Activated CD4-positive, alpha-beta T cell treated with anti-CD3 and anti-CD28 coated beads, Interleukin-2, amount 10 ng/mL, durations not matched to agents 24 days and 14 days (primary cell): ENCODE measurements at regions of chr3 and their contacts with region 1.

Region 1: DNA sequence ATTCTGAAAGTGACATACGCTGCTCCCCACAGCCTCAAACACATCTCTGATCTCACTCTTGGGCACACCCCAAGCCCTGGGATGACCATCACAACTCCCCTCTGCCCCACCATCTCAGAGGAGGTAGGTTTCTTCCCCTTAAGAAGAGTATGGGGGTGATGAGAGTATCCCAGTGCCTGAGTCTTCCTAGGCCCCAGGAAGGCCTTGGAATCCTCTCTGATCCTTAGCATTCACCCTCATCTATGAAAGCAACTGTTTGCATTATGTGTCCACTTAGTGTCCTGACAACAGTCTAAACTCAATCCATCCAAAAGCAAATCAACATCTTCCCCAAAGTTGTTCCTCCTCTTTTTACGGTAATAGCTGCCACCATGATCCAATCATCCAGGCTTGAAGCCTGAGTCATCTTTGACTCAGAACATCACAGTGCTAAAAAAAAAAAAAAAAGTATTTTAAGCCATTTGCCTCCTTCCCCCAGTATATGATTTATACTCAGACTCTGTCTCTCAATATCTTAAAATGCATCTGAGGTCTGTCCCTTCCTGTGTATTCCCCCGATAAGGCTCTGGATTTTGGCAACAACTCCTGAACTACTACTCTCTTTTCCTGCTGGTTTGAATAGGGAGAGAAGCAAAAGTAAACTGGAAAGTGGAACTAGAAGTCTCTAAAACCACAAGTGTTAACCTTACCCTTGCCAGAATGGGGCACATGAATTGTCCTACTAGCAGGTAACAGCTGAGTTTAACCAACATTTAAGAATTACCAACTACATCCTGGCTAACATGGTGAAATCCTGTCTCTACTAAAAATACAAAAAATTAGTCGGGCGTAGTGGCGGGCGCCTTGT is 22.5 kb downstream of the POPDC2 start:
- DNase-seq: peak; percentile 68
- H3K4me3 Mint-ChIP-seq: peak overlapping the region; percentile 75
- H3K27ac Mint-ChIP-seq: peak overlapping the region; percentile 95
- H3K4me1 Mint-ChIP-seq: peaks cover 36% of the 10 kb centered on the region
- H3K27me3 Mint-ChIP-seq: no peaks in the 10 kb centered on the region

Region 2: GRCh38 chr3:119293871-119294695 is 343.8 kb before region 1 on chr3 and contains the start of gene ARHGAP31:
- intact Hi-C with region 1: loop called (anchors 1 kb)
- DNase-seq: peak; percentile 95
- H3K4me3 Mint-ChIP-seq: peak within 1 kb of the TSS; percentile 86
- H3K27ac Mint-ChIP-seq: peak within 1 kb of the TSS; percentile 89
- H3K4me1 Mint-ChIP-seq: peaks cover 37% of the 10 kb centered on the region
- H3K27me3 Mint-ChIP-seq: peaks cover 14% of the 10 kb centered on the region
- total RNA-seq, gene ARHGAP31: 9.5 and 11.0 TPM in 2 replicates

Region 3: DNA sequence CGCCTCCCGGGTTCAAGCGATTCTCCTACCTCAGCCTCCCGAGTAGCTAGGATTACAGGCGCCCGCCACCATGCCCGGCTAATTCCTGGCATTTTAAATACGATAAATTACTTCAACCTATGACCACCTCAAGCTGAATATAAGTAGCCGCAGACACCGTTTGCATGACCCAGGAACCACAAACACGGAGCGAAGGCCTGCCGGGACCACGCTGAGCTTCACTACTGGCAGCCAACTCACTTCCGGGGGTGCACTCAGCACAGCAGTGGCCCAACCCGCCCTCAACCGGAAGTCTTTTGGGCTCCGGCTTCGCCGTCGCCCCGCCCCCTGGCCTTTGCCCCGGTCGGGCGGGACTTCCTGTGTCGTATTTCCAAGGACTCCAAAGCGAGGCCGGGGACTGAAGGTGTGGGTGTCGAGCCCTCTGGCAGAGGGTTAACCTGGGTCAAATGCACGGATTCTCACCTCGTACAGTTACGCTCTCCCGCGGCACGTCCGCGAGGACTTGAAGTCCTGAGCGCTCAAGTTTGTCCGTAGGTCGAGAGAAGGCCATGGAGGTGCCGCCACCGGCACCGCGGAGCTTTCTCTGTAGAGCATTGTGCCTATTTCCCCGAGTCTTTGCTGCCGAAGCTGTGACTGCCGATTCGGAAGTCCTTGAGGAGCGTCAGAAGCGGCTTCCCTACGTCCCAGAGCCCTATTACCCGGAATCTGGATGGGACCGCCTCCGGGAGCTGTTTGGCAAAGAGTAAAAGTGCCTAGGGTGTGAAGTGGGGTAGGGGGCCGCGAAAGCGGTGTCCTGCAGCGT is 139.5 kb before region 1 on chr3 and contains the start of gene TIMMDC1:
- intact Hi-C with region 1: loop called (anchors 2 kb)
- DNase-seq: peak; percentile 99
- H3K4me3 Mint-ChIP-seq: peak within 1 kb of the TSS; percentile 99
- H3K27ac Mint-ChIP-seq: peak within 1 kb of the TSS; percentile 99
- H3K4me1 Mint-ChIP-seq: peaks cover 23% of the 10 kb centered on the region
- H3K27me3 Mint-ChIP-seq: no peaks in the 10 kb centered on the region
- total RNA-seq, gene TIMMDC1: 113 and 117 TPM in 2 replicates

Region 4: GRCh38 chr3:119559441-119559963 is 78.4 kb before region 1 on chr3 and contains the start of gene CD80:
- intact Hi-C with region 1: loop called (anchors 1 kb)
- DNase-seq: peak; percentile 92
- H3K4me3 Mint-ChIP-seq: peak within 1 kb of the TSS; percentile 80
- H3K27ac Mint-ChIP-seq: peak within 1 kb of the TSS; percentile 77
- H3K4me1 Mint-ChIP-seq: peaks cover 53% of the 10 kb centered on the region
- H3K27me3 Mint-ChIP-seq: no peaks in the 10 kb centered on the region
- total RNA-seq, gene CD80: 12.5 and 13.0 TPM in 2 replicates

Region 5: DNA sequence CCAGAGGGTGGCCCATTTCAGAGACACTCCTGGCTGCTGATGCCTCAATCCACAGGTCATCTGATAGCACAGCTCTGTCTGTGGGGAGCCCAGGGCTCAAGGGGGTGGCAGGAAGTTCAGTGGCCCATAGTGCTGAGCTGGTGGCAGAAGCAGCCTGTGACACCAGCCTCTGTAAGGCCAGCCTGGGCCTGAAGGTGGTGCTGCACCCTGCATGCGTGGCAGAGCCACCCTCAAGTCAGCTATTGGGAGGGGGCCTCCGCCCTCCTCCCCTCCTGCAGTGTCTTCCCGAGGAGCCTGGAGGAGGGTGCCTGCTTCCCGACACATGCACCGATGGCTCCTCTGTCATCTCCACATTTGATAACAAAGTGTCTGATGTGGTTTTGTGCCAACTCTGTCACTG is 37.2 kb before region 1 on chr3:
- intact Hi-C with region 1: loop called (anchors 2 kb)
- DNase-seq: peak; percentile 69
- H3K4me3 Mint-ChIP-seq: no peak overlapping the region
- H3K27ac Mint-ChIP-seq: peak overlapping the region; percentile 77
- H3K4me1 Mint-ChIP-seq: peaks cover 31% of the 10 kb centered on the region
- H3K27me3 Mint-ChIP-seq: no peaks in the 10 kb centered on the region

Region 6: GRCh38 chr3:120114981-120115380 is 477.1 kb after region 1 on chr3:
- intact Hi-C with region 1: no loop called
- DNase-seq: no peak
- H3K4me3 Mint-ChIP-seq: no peak overlapping the region
- H3K27ac Mint-ChIP-seq: no peak overlapping the region
- H3K4me1 Mint-ChIP-seq: no peaks in the 10 kb centered on the region
- H3K27me3 Mint-ChIP-seq: peaks cover 3% of the 10 kb centered on the region